Heart left ventricle (tissue), 16 donors: ENCODE measurements at regions of chr15 and their contacts with region 1.

Region 1: GRCh38 chr15:69058830-69059556 is 44.5 kb downstream of the NOX5 start:
- DNase-seq: peak; percentile 84 to 93 (median 87)
- ATAC-seq: peak; percentile 78 to 85 (median 81)
- H3K4me3 ChIP-seq: peak overlapping the region in 6 of 12 donors; percentile 0 to 29 (median 22)
- H3K27ac ChIP-seq: peak overlapping the region in 8 of 12 donors; percentile 37 to 72 (median 58)
- H3K4me1 ChIP-seq: peaks cover 0 to 23% (median 16%) of the 10 kb centered on the region in 12 donors
- H3K27me3 ChIP-seq: peaks cover 0 to 8% (median 0%) of the 10 kb centered on the region in 9 donors
- CTCF ChIP-seq: peak; percentile 80 to 93 (median 88)
- POLR2A ChIP-seq: no peak

Region 2: DNA sequence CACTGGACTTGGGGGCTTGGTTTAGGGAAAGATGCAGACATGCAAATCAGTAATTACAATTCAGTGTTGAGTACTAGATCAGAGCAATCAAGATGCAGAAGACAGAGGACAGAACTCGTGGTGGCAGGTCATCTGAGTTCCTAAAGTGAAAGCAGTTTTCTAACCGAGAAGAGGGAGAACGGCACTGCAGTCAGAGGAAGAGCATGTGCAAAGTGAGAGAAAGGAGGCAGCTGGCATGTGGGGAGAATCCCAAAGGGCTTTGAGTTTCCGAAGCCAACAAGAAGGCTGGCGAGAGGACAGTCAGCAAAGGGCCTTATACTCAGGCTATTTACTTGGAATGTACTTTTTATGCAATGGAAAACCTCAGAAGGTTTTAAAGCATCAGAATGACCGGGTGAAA is 325.3 kb before region 1 on chr15:
- intact Hi-C with region 1: no loop called
- DNase-seq: no peak
- ATAC-seq: no peak
- H3K4me3 ChIP-seq: no peak overlapping the region
- H3K27ac ChIP-seq: no peak overlapping the region
- H3K4me1 ChIP-seq: peaks cover 3 to 60% (median 37%) of the 10 kb centered on the region in 12 donors
- H3K27me3 ChIP-seq: no peaks in the 10 kb centered on the region
- CTCF ChIP-seq: no peak
- POLR2A ChIP-seq: no peak

Region 3: DNA sequence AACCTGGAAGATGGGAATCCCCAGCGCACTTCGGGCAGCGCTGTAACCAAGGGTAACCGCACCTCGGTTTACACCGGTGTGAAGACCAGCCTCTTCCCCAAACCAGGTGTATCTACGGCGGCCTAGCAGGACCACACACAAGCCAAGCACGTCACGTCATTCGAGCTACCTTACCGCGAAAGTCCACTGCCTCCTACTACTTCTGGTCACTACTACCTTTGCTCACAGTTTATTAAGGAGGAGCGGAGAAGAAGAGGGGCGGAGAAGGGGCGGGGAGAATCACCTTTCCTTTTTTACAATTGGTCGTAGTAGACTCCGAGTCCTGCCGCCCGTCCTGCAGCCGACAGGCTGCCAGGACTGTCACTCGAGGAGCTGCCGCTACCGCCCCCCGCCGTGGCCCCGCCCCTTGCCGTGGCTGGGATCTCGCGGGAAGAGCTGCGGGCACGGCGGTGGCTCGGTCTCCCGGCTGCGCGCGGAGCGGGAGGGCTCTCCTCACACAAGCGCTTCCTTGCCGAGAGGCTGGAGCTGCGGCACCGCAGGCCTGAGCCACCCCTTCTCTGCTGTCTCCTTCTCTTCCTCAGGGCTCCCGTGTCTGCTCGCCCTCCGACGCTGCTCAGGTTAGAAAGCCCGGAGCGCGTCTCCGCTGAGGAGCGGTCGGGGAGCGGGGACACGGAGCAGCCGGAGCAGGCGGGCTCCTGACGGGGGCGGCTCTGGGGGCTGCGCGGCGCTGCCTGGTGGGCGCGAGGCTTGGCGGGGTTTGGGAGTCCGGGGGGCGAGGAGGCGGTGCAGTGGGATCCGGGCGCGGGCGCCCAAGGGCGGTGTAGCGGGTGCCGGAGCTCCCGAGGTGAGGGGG is 101.4 kb after region 1 on chr15 and contains the start of gene GLCE:
- intact Hi-C with region 1: loop called in 8 of 10 experiments (anchors 1 to 10 kb)
- DNase-seq: peak; percentile 96 to 97 (median 97)
- ATAC-seq: peak; percentile 98 to 100 (median 99)
- H3K4me3 ChIP-seq: peak within 1 kb of the TSS; percentile 74 to 99 (median 89)
- H3K27ac ChIP-seq: peak within 1 kb of the TSS; percentile 6 to 90 (median 86)
- H3K4me1 ChIP-seq: peaks cover 0 to 20% (median 8%) of the 10 kb centered on the region in 12 donors
- H3K27me3 ChIP-seq: no peaks in the 10 kb centered on the region
- CTCF ChIP-seq: peak in 1 of 12 donors; percentile 7
- POLR2A ChIP-seq: peak in 1 of 2 donors; percentile 96
- total RNA-seq, gene GLCE: 7.8 to 14.3 (median 8.4) TPM

Region 4: GRCh38 chr15:69265347-69265955 is 206.5 kb after region 1 on chr15:
- intact Hi-C with region 1: loop called (anchors 1 to 5 kb)
- DNase-seq: no peak
- ATAC-seq: no peak
- H3K4me3 ChIP-seq: no peak overlapping the region
- H3K27ac ChIP-seq: no peak overlapping the region
- H3K4me1 ChIP-seq: peaks cover 0 to 3% (median 0%) of the 10 kb centered on the region in 12 donors
- H3K27me3 ChIP-seq: no peaks in the 10 kb centered on the region
- CTCF ChIP-seq: peak; percentile 47 to 75 (median 65)
- POLR2A ChIP-seq: no peak

Region 5: DNA sequence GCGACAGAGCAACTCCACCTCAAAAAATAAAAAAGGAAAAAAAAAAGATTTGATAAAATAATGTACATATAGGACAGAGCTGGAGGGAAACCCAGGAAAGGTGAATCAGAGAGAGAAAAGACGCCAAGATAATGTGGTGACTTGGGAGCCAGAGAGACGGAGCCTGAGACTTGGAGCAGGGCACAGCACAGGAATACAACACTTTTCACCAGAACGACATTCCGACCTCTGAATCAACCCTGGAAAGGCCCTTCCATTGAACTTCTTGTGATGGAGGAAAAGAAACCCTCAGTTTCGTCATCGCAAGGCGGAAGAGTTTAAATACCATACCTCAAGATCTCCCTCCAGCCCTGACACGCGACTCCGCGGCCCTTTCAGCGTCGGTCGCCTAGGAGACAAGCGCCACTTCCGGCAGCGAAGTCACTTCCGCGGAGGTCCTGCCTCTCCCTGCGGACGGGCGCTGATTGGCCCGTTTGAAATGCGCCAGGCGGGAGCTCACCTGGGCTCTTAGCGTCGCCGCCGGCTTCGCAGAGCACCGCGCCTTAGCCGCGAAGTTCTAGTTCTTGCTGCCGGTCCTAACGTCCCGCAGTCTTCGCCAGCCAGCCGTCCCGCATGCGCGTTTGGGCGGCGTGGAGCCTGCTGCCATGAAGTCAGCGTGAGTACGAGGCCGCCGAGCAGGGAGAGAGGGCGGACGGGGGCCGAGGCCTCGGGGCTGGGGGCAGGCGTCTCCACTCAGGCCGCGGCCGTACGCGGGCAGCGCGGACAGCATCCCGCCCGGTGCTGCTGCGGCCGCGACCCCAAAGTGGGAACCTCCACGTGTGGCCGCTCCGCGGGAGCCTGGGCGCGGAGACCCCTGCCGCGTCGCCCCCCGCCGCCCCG is 355.1 kb after region 1 on chr15 and contains the start of gene KIF23:
- intact Hi-C with region 1: loop called in 1 of 10 experiments (anchors 5 kb)
- DNase-seq: peak; percentile 84 to 94 (median 92)
- ATAC-seq: peak; percentile 92 to 98 (median 98)
- H3K4me3 ChIP-seq: peak within 1 kb of the TSS; percentile 55 to 91 (median 79)
- H3K27ac ChIP-seq: peak within 1 kb of the TSS in 6 of 12 donors; percentile 13 to 51 (median 34)
- H3K4me1 ChIP-seq: peaks cover 0 to 15% (median 2%) of the 10 kb centered on the region in 12 donors
- H3K27me3 ChIP-seq: no peaks in the 10 kb centered on the region
- CTCF ChIP-seq: no peak
- POLR2A ChIP-seq: no peak
- total RNA-seq, gene KIF23: 0.32 to 7.7 (median 1.4) TPM in 8 of 9 donors, not detected in the other